ENCODE measurements at regions of chr11 and their contacts with region 1.

Region 1: DNA sequence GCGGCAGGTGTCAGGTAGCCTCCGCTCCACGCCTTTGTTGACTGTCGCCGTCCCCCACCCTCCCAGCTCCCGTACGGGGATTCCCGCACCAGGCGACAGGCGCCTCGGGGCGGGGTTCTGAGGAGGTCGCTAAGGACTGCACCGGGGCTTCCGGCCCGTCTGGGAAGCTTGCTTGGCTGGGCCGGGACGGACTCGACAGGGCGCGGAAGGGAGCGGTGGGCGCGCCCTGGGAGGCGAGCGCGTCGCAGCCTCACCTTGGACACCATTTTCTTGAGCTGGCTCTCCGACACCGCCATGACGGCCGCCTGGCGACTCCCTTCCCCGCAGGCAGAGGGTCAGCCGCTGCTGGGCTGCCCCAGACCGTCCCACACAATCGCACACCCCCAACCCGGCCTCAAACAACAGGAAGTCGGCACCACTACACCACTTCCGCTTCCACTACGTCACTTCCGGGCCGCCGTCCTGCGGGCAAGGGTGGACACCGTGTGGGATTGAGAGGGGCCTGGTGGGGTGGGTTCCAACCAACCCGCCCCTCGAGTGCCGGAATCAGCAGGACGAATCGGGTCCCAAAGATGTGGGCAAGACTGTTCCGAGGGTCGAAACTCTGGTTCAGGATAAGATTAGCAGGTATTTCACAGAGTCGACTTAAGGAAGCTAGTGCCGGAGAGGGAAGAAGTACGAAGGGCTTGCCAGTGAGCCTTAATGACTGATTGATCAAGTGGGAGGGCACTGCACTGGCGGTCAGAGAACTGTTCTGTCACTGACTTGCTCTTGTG is at the start of gene TSG101:
- DNase-seq: peak; percentile 94
- ATAC-seq: peak; percentile 97
- H3K4me3 ChIP-seq: peak within 1 kb of the TSS; percentile 84 to 88 (median 85)
- H3K27ac ChIP-seq: peak within 1 kb of the TSS; percentile 93
- H3K4me1 ChIP-seq: peaks cover 40% of the 10 kb centered on the region
- H3K27me3 ChIP-seq: no peaks in the 10 kb centered on the region; a peak in 1 of 5 replicates
- CTCF ChIP-seq: 0 out of 2 replicates have a peak, but pooled peaks have one; percentile 14
- EP300 ChIP-seq: no peak
- POLR2A ChIP-seq: peak; percentile 90 to 95
- RAD21 ChIP-seq: 0 out of 2 replicates have a peak, but pooled peaks have one; percentile 41
- total RNA-seq, gene TSG101: 69.3 and 96.3 TPM in 2 replicates

Region 2: DNA sequence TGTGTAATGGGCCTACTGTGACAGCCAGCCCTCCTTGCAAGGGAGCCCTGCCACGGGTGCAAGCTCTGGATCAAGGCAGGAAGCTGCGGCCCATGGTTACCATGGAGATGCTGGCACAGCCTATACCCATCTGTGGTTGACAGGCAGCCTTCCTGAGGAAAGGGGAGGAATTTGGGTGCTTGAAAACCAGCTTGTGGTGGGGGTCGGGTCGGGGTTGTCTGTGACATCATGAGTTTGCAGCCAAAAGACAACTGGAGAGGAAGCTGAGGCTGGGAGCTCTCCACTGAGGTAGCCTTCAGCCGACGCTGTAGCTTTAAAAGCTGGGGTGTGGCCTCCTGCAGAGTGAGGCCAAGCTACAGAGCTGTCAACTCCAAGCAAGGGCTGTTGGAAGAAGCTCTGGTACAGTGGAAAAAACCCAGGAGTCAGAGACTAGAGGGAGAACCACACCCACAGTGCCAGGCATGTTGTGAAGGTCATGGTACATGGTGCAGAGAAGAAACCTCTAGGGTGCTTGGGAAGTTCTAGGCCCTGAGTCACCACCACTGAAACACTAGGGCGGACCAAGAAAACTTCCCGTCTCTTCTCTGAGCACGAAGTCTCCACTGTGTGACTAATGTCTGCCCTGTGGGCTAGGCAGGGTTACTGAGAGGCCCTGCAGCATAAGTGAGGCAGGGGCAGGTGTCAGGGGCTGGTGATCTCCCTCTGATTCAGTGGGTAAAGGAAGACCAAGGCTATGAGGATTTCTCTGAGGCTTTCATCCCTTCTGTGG is 143.1 kb before region 1 on chr11:
- CTCF ChIA-PET with region 1: no interaction called
- POLR2A ChIA-PET with region 1: interaction called, 21 read pairs
- in situ Hi-C with region 1: no loop called
- intact Hi-C with region 1: no loop called
- DNase-seq: peak; percentile 91
- ATAC-seq: peak; percentile 83
- H3K4me3 ChIP-seq: peak overlapping the region; percentile 54 to 74 (median 58)
- H3K27ac ChIP-seq: peak overlapping the region; percentile 82
- H3K4me1 ChIP-seq: peaks cover 56% of the 10 kb centered on the region
- H3K27me3 ChIP-seq: no peaks in the 10 kb centered on the region
- CTCF ChIP-seq: no peak
- EP300 ChIP-seq: peak in 1 of 2 experiments; percentile 47; a peak in 1 of 4 replicates
- POLR2A ChIP-seq: peak in 1 of 2 experiments; percentile 28; a peak in 2 of 4 replicates
- RAD21 ChIP-seq: no peak

Region 3: DNA sequence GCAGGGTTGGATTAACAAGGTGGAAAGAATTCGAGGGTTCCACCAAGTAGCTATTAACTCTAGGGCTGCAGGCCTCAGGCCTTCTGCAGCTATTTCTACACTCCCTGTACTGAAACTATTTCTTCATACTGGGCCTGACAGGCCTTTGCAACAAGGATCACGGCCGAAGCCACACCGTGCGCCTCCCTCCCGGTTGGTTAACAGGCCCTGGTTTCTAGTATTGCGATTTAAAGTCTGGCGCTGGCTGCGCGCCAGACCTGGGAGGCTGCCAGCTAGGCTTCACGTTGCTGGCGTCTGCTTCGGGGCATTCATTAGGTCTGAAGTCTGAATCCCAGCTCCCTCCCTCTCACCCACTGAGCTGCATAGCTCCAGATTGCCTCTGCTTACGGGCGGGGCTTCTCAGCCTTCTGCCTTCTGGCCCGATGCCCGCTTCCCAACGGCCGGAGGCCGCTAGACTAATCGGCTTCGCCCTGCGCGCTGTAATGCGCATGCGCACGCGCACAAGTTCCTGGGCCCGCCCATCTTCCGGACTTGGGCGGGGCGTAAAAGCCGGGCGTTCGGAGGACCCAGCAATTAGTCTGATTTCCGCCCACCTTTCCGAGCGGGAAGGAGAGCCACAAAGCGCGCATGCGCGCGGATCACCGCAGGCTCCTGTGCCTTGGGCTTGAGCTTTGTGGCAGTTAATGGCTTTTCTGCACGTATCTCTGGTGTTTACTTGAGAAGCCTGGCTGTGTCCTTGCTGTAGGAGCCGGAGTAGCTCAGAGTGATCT is 130.8 kb before region 1 on chr11:
- CTCF ChIA-PET with region 1: no interaction called
- POLR2A ChIA-PET with region 1: interaction called, 31 read pairs
- in situ Hi-C with region 1: no loop called
- intact Hi-C with region 1: loop called (anchors 10 kb)
- DNase-seq: peak; percentile 97
- ATAC-seq: peak; percentile 83
- H3K4me3 ChIP-seq: peak overlapping the region; percentile 83 to 97 (median 87)
- H3K27ac ChIP-seq: peak overlapping the region; percentile 83
- H3K4me1 ChIP-seq: peaks cover 71% of the 10 kb centered on the region
- H3K27me3 ChIP-seq: no peaks in the 10 kb centered on the region; a peak in 1 of 5 replicates
- CTCF ChIP-seq: no peak; the same call in 1 of the 2 replicates
- EP300 ChIP-seq: peak in 1 of 2 experiments; percentile 40; a peak in 1 of 4 replicates
- POLR2A ChIP-seq: peak; percentile 75 to 90
- RAD21 ChIP-seq: peak; percentile 35; the same call in 1 of the 2 replicates

Region 4: GRCh38 chr11:18502352-18502751 is 24.4 kb before region 1 on chr11:
- CTCF ChIA-PET with region 1: no interaction called
- POLR2A ChIA-PET with region 1: interaction called, 10 read pairs
- in situ Hi-C with region 1: no loop called
- intact Hi-C with region 1: no loop called
- DNase-seq: no peak
- ATAC-seq: no peak
- H3K4me3 ChIP-seq: no peak overlapping the region
- H3K27ac ChIP-seq: no peak overlapping the region
- H3K4me1 ChIP-seq: no peaks in the 10 kb centered on the region
- H3K27me3 ChIP-seq: no peaks in the 10 kb centered on the region; a peak in 1 of 5 replicates
- CTCF ChIP-seq: no peak
- EP300 ChIP-seq: no peak
- POLR2A ChIP-seq: no peak
- RAD21 ChIP-seq: no peak

Region 5: DNA sequence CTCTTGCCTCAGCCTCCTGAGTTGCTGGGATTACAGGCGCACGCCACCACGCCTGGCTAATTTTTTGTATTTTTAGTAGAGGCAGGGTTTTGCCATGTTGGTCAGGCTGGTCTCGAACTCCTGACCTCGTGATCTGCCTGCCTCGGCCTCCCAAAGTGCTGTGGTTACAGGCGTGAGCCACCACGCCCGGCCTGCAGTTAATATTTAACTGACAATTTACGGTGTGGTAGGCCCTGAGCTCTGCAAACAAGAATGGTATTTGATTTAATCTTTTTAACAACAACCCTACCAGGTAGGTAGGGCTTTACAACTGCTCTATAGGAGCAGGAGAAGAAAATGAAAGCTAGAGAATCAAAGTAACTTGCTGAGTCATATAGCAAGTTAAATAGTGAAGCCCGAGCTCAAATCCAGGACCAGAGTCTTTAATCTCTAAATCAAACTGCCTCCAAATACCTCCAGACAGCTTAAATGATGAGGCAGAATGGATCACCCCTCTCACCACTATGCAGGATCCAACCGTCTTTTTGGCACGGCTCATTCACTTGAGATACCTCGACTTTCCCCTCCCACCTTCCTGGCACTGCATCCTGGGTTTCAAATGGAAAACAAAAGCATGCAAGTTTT is 52.4 kb after region 1 on chr11:
- CTCF ChIA-PET with region 1: no interaction called
- POLR2A ChIA-PET with region 1: interaction called, 15 read pairs
- in situ Hi-C with region 1: no loop called
- intact Hi-C with region 1: no loop called
- DNase-seq: peak; percentile 93
- ATAC-seq: peak; percentile 98
- H3K4me3 ChIP-seq: peak overlapping the region; percentile 17 to 27 (median 24); a peak in 3 of 6 replicates
- H3K27ac ChIP-seq: peak overlapping the region; percentile 79
- H3K4me1 ChIP-seq: peaks cover 66% of the 10 kb centered on the region
- H3K27me3 ChIP-seq: no peaks in the 10 kb centered on the region
- CTCF ChIP-seq: no peak
- EP300 ChIP-seq: no peak; a peak in 1 of 4 replicates
- POLR2A ChIP-seq: no peak
- RAD21 ChIP-seq: no peak

Region 6: GRCh38 chr11:18588297-18589252 is 61.9 kb after region 1 on chr11 and contains the start of gene UEVLD:
- CTCF ChIA-PET with region 1: no interaction called
- POLR2A ChIA-PET with region 1: interaction called, 15 read pairs
- in situ Hi-C with region 1: no loop called
- intact Hi-C with region 1: loop called (anchors 2 kb)
- DNase-seq: peak; percentile 81
- ATAC-seq: peak; percentile 93
- H3K4me3 ChIP-seq: peak within 1 kb of the TSS; percentile 82 to 89 (median 83)
- H3K27ac ChIP-seq: peak within 1 kb of the TSS; percentile 70
- H3K4me1 ChIP-seq: peaks cover 48% of the 10 kb centered on the region
- H3K27me3 ChIP-seq: no peaks in the 10 kb centered on the region
- CTCF ChIP-seq: peak; percentile 13
- EP300 ChIP-seq: 0 out of 4 replicates have a peak, but pooled peaks of 1 of the 2 experiments have one; percentile 34
- POLR2A ChIP-seq: peak; percentile 81 to 92
- RAD21 ChIP-seq: no peak
- total RNA-seq, gene UEVLD: 13.7 and 21.1 TPM in 2 replicates

Region 7: GRCh38 chr11:18634140-18635032 is 107.7 kb after region 1 on chr11 and contains the start of gene SPTY2D1:
- CTCF ChIA-PET with region 1: no interaction called
- POLR2A ChIA-PET with region 1: interaction called, 16 read pairs
- in situ Hi-C with region 1: no loop called
- intact Hi-C with region 1: loop called (anchors 1 kb)
- DNase-seq: peak; percentile 99
- ATAC-seq: peak; percentile 99
- H3K4me3 ChIP-seq: peak within 1 kb of the TSS; percentile 80 to 90 (median 84)
- H3K27ac ChIP-seq: peak within 1 kb of the TSS; percentile 84
- H3K4me1 ChIP-seq: peaks cover 12% of the 10 kb centered on the region
- H3K27me3 ChIP-seq: no peaks in the 10 kb centered on the region; a peak in 1 of 5 replicates
- CTCF ChIP-seq: 0 out of 2 replicates have a peak, but pooled peaks have one; percentile 11
- EP300 ChIP-seq: peak in 1 of 2 experiments; percentile 40; a peak in 1 of 4 replicates
- POLR2A ChIP-seq: peak; percentile 94
- RAD21 ChIP-seq: no peak; the same call in 1 of the 2 replicates
- total RNA-seq, gene SPTY2D1: 14.8 and 22.2 TPM in 2 replicates

Region 8: GRCh38 chr11:18684267-18684666 is 157.6 kb after region 1 on chr11:
- CTCF ChIA-PET with region 1: no interaction called
- POLR2A ChIA-PET with region 1: no interaction called
- in situ Hi-C with region 1: no loop called
- intact Hi-C with region 1: no loop called
- DNase-seq: no peak
- ATAC-seq: no peak
- H3K4me3 ChIP-seq: no peak overlapping the region
- H3K27ac ChIP-seq: no peak overlapping the region
- H3K4me1 ChIP-seq: peaks cover 13% of the 10 kb centered on the region
- H3K27me3 ChIP-seq: peaks cover 2 to 8% of the 10 kb centered on the region in 2 experiments; a peak in 2 of 5 replicates
- CTCF ChIP-seq: no peak
- EP300 ChIP-seq: no peak
- POLR2A ChIP-seq: no peak
- RAD21 ChIP-seq: no peak

Measured in HepG2 (cell line).